ENCODE measurements at regions of chr1 and their contacts with region 1.

Region 1: DNA sequence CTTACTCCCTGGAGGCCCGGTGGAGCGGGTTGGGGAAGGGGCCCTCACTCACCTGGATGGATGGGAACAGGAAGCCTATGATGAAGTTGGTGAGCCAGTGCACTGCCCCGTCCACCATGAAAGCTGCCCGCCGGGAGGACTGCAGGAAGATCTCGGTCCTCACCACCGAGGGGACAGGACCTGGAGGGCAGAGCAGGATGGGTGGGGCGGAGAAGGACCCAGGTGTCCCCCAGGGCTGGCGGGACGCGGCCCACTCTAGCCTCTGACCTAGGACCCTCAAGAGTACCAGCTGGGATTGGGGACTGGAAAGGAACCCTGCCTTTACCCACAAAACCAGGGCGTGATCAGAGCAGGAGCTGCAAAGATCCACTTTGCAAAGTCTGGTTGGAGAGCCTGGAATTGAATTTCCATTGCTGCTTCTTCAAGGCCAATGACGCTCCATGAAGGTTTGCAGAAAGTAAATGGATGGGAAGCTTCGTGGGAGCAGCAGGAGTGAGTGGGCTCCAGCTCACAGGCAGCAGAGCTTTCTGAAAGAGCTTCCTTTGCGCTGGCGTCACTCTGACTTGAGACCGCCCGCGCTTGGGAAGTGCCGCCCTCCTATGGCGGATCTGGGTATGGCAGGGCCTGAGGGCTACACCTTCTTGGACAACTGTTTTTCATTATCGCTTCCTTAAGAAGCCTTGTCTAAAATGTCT is 21.4 kb downstream of the SLC2A7 start:
- DNase-seq: peak; percentile 88
- H3K4me3 ChIP-seq: no peak overlapping the region
- H3K27ac ChIP-seq: no peak overlapping the region
- H3K4me1 ChIP-seq: peaks cover 41% of the 10 kb centered on the region
- CTCF ChIP-seq: peak; percentile 96

Region 2: GRCh38 chr1:8913111-8913856 is 91.6 kb before region 1 on chr1:
- CTCF ChIA-PET with region 1: interaction called, 4 read pairs
- POLR2A ChIA-PET with region 1: no interaction called
- intact Hi-C with region 1: loop called (anchors 1 kb)
- DNase-seq: no peak
- H3K4me3 ChIP-seq: no peak overlapping the region
- H3K27ac ChIP-seq: no peak overlapping the region
- H3K4me1 ChIP-seq: peaks cover 2% of the 10 kb centered on the region
- CTCF ChIP-seq: no peak

Region 3: DNA sequence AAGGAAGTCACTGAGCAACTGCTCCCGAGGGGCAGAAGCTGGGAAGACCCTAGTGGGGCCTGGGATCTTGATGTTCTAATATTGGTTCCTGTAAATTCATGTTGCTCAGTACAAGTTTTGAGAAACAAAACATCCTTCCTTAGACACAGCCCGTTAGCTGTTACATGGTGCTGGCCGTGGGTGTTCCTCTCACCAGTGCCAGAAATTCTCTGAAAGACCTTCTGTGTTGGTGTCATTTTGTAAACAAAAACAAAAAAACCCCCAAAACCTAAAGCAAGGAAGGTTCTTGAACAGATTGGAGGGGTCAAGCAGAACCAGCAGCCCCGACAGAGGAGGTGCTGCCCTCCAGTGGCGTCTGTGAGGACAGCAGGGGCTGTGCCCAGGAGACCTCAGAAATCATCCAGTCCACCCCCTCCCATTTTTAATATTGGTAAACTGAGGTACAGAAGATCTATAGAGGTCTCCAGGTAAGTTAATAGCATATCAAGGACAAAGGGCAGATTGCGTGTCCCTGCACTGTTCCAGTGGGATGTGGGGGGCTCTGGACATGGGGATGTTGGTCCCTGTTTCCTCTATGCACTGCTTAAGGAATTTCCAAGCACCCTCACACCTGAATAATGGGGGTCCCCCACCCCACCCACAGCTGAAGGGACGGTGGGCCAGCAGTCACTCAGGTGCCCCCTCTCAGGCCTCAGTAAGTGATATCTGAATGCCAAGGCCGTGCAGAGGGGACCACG is 16.8 kb before region 1 on chr1:
- CTCF ChIA-PET with region 1: interaction called, 5 read pairs
- POLR2A ChIA-PET with region 1: interaction called, 10 read pairs
- intact Hi-C with region 1: loop called (anchors 1 kb)
- DNase-seq: peak; percentile 75
- H3K4me3 ChIP-seq: no peak overlapping the region
- H3K27ac ChIP-seq: peak overlapping the region; percentile 81
- H3K4me1 ChIP-seq: peaks cover 29% of the 10 kb centered on the region
- CTCF ChIP-seq: peak; percentile 100

Region 4: GRCh38 chr1:9069326-9070100 is 64.7 kb after region 1 on chr1 and contains the start of gene SLC2A5:
- CTCF ChIA-PET with region 1: no interaction called
- POLR2A ChIA-PET with region 1: interaction called, 6 read pairs
- intact Hi-C with region 1: loop called (anchors 2 kb)
- DNase-seq: peak; percentile 97
- H3K4me3 ChIP-seq: peak within 1 kb of the TSS; percentile 83
- H3K27ac ChIP-seq: peak within 1 kb of the TSS; percentile 92
- H3K4me1 ChIP-seq: peaks cover 64% of the 10 kb centered on the region
- CTCF ChIP-seq: peak; percentile 24; the same call in 1 of the 2 replicates
- total RNA-seq, gene SLC2A5: 109 and 112 TPM in 2 replicates

Region 5: GRCh38 chr1:9196129-9197040 is 191.5 kb after region 1 on chr1:
- CTCF ChIA-PET with region 1: no interaction called
- POLR2A ChIA-PET with region 1: no interaction called
- intact Hi-C with region 1: loop called (anchors 5 kb)
- DNase-seq: peak; percentile 70
- H3K4me3 ChIP-seq: no peak overlapping the region
- H3K27ac ChIP-seq: no peak overlapping the region
- H3K4me1 ChIP-seq: peaks cover 17% of the 10 kb centered on the region
- CTCF ChIP-seq: peak; percentile 93

Measured in OCI-LY7 (cell line).